ENCODE measurements at regions of chr10 and their contacts with region 1.

Region 1: DNA sequence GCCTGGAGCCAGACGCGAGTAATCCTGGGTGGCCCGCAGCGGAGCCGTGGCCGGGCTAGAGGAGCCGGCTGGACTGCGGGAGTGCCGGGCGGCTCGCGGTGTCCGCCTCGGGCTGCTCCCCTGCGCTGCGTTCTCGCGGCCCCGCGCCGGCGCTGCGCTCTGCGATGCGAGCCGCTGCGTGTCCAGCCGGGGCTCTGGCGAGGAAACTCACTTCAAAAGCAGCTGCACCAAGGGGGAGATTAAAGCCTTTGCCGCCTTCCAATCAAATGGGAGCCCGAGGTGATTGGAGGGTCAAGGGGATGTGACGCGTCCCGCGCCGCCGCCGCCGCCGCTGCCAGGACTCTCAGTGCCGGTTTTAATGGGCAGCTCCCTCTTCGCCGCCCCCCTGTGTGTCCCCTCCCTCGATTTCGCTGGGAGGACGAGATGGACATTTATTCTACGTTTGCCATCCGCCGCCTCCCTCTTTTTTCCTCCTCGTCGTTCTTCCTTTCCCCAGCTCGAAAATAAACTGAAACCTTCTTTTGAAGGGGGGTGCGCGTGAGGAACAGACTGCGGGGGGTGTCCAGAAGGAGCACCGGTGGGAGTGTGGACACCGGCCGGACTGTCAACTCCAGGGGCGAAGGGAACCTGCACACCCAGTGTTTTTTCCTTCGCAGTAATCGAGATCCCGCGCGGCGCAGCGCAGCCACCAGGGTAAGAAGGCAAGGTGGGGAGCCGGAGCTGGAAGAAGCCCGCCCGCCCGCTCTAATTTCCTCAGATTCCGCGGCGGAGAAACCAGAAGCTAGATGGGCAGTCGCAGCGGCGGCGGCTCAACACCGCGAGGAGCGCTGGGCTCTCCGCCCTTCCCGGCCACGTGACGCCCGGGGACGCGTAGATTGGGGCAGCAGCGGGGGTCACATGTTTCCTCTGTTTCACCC is at the start of gene ZNF503:
- DNase-seq: peak; percentile 98 to 99
- ATAC-seq: peak; percentile 91
- H3K4me3 ChIP-seq: peak within 1 kb of the TSS; percentile 75 to 81
- H3K27ac ChIP-seq: peak within 1 kb of the TSS; percentile 70 to 87
- H3K4me1 ChIP-seq: no peaks in the 10 kb centered on the region
- H3K27me3 ChIP-seq: no peaks in the 10 kb centered on the region
- total RNA-seq, gene ZNF503: 15.7 to 32.1 TPM

Region 2: DNA sequence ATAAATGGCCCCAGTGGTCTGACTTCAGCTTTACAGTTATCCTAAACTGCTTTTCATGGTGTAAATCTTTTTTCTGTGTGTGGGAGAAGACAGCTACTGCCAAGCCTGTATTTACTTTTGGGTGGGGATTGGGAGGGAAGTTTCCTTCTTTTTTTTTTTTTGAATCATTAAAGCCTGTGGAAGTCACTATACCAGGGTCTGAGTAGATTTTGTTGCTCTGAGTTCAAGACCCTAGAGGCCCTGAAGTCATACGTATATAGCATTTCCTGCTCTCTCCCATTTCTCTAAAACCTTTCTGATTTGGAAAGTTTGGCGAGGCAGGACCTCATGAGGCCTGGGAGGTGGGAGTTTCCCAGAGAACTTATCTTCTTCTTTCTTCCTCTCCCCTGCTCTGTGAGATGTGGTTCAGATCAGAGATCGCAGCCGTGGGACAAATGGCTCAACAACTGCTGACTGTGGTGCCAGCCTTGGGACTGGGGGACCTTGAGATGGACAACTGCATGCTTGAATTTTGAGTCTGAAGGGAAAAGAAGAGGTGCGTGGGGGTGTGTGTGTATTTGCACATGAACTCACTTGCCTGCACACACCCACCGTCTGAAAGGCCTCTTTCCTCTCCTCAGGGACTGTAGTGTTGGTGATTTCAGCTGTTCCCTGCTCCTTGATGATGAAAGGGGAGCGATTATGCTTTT is 47.7 kb after region 1 on chr10:
- intact Hi-C with region 1: no loop called
- DNase-seq: no peak
- ATAC-seq: no peak
- H3K4me3 ChIP-seq: no peak overlapping the region
- H3K27ac ChIP-seq: no peak overlapping the region
- H3K4me1 ChIP-seq: no peaks in the 10 kb centered on the region
- H3K27me3 ChIP-seq: no peaks in the 10 kb centered on the region

Region 3: GRCh38 chr10:75508239-75508813 is 106.5 kb after region 1 on chr10:
- intact Hi-C with region 1: loop called in 1 of 2 experiments (anchors 5 kb)
- DNase-seq: no peak
- ATAC-seq: no peak
- H3K4me3 ChIP-seq: no peak overlapping the region
- H3K27ac ChIP-seq: peak overlapping the region in 1 of 2 donors; percentile 26
- H3K4me1 ChIP-seq: peaks cover under 1 to 21% of the 10 kb centered on the region in 2 donors
- H3K27me3 ChIP-seq: no peaks in the 10 kb centered on the region

Region 4: GRCh38 chr10:75776738-75777504 is 375.1 kb after region 1 on chr10:
- intact Hi-C with region 1: loop called in 1 of 2 experiments (anchors 5 kb)
- DNase-seq: no peak
- ATAC-seq: no peak
- H3K4me3 ChIP-seq: no peak overlapping the region
- H3K27ac ChIP-seq: no peak overlapping the region
- H3K4me1 ChIP-seq: peaks cover 0 to 5% of the 10 kb centered on the region in 2 donors
- H3K27me3 ChIP-seq: no peaks in the 10 kb centered on the region

Region 5: GRCh38 chr10:75910032-75910431 is 508.2 kb after region 1 on chr10:
- intact Hi-C with region 1: loop called (anchors 1 to 5 kb)
- DNase-seq: no peak
- ATAC-seq: no peak
- H3K4me3 ChIP-seq: no peak overlapping the region
- H3K27ac ChIP-seq: no peak overlapping the region
- H3K4me1 ChIP-seq: no peaks in the 10 kb centered on the region
- H3K27me3 ChIP-seq: no peaks in the 10 kb centered on the region

Region 6: GRCh38 chr10:76303682-76304316 is 902.0 kb after region 1 on chr10:
- intact Hi-C with region 1: loop called (anchors 5 to 10 kb)
- DNase-seq: peak; percentile 79 to 83
- ATAC-seq: peak; percentile 81
- H3K4me3 ChIP-seq: peak overlapping the region in 1 of 2 donors; percentile 12
- H3K27ac ChIP-seq: no peak overlapping the region
- H3K4me1 ChIP-seq: peaks cover 0 to 5% of the 10 kb centered on the region in 2 donors
- H3K27me3 ChIP-seq: no peaks in the 10 kb centered on the region

Region 7: DNA sequence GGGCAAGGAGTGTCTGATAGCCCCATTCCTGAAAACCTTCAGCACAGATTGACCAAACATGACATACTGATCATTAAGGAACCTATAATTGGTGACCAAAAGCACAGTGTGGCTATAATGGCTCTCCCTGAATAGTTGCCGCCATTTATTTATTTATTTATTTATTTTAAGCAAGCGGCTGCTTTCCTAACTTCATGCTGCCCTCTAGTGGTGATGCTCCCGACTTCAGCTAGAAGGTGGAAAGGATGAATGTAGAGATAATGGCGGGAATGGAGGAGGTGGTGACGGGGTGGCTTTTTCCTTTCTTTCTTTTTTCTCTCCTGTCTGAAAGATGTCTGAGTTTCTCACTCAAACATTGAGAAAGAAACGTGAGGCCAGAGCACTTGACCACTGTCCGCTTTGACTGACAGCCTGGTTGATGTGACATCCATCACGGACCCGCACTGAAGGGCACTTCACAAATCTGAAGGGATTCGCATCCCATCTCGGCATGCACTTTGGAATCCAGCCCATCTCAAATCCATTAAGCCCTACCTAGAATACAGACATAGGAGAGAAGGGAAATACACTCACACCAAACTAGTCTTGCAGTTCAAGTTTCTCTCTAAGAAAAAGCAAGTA is 1145.6 kb after region 1 on chr10:
- intact Hi-C with region 1: loop called (anchors 5 to 10 kb)
- DNase-seq: peak; percentile 83 to 84
- ATAC-seq: peak; percentile 72
- H3K4me3 ChIP-seq: no peak overlapping the region
- H3K27ac ChIP-seq: no peak overlapping the region
- H3K4me1 ChIP-seq: no peaks in the 10 kb centered on the region
- H3K27me3 ChIP-seq: no peaks in the 10 kb centered on the region